ENCODE measurements at regions of chr1 and their contacts with region 1.

Region 1: GRCh38 chr1:31984419-31985347 is 29.0 kb upstream of the KHDRBS1 start:
- DNase-seq: peak; percentile 50
- H3K4me3 Mint-ChIP-seq: no peak overlapping the region
- H3K27ac Mint-ChIP-seq: peak overlapping the region; percentile 94
- H3K4me1 Mint-ChIP-seq: peaks cover 58% of the 10 kb centered on the region
- H3K27me3 Mint-ChIP-seq: no peaks in the 10 kb centered on the region

Region 2: GRCh38 chr1:32013386-32014198 is 28.9 kb after region 1 on chr1 and contains the start of gene KHDRBS1:
- CTCF ChIA-PET with region 1: no interaction called
- POLR2A ChIA-PET with region 1: interaction called, 32 read pairs
- DNase-seq: peak; percentile 99
- H3K4me3 Mint-ChIP-seq: peak within 1 kb of the TSS; percentile 94
- H3K27ac Mint-ChIP-seq: peak within 1 kb of the TSS; percentile 94
- H3K4me1 Mint-ChIP-seq: peaks cover 30% of the 10 kb centered on the region
- H3K27me3 Mint-ChIP-seq: no peaks in the 10 kb centered on the region
- total RNA-seq, gene KHDRBS1: 168 to 169 TPM